PC-9 (cell line): ENCODE measurements at regions of chr1 and their contacts with region 1.

Region 1: DNA sequence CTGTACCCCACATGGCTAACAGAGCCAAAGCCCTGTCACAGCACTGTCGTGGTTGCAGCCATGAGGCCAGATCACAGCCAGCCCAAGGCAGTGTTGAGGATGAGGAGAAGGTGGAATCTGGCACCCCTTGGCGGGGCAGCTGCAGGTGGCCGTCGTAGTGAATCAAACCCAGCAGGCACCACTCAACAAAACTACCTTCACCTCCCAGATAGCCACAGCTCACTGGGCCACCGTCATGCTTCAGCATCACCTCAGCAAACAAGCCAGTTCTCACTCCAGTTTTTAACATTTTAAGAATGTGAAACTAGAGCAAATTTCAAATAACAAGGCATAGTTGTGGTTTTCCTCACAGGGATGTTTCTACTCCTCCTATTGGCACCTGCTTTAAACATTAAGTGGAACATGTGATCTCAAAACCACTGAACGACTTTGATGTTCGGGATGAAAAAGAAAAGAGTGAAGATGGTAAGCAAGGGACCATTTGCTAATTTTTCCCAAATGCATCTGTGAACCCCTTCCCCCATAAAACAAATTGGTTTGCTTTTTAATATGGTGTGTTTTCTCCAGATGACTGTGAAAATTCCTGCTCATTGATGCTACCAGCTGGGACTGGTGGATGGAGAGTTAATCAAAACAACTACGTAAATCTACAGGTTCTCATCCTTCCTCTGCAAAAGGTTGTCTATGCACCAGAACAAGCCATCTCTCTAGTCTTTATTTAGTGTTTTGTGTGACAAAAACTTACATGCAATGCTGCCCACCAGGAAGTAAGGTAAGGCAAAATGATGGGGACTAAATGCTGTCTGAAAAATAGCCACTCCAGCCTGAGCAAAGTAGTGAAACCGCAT is 45.5 kb downstream of the TOR1AIP2 start:
- DNase-seq: no peak
- H3K4me3 ChIP-seq: no peak overlapping the region
- H3K27ac ChIP-seq: no peak overlapping the region
- H3K4me1 ChIP-seq: 0 out of 2 replicates have a peak, but pooled peaks cover 3% of the 10 kb centered on the region
- H3K27me3 ChIP-seq: peaks cover 7% of the 10 kb centered on the region; the same call in 1 of the 2 replicates
- CTCF ChIP-seq: no peak

Region 2: GRCh38 chr1:179742717-179743678 is 89.1 kb before region 1 on chr1 and contains the start of gene FAM163A:
- CTCF ChIA-PET with region 1: no interaction called
- POLR2A ChIA-PET with region 1: interaction called, 35 read pairs
- intact Hi-C with region 1: no loop called
- DNase-seq: no peak
- H3K4me3 ChIP-seq: no peak within 1 kb of the TSS
- H3K27ac ChIP-seq: no peak within 1 kb of the TSS
- H3K4me1 ChIP-seq: no peaks in the 10 kb centered on the region
- H3K27me3 ChIP-seq: 0 out of 2 replicates have a peak, but pooled peaks cover 15% of the 10 kb centered on the region
- CTCF ChIP-seq: no peak
- total RNA-seq, gene FAM163A: not detected in 2 replicates